Ovary (tissue), 10 donors: ENCODE measurements at regions of chr13 and their contacts with region 1.

Region 1: DNA sequence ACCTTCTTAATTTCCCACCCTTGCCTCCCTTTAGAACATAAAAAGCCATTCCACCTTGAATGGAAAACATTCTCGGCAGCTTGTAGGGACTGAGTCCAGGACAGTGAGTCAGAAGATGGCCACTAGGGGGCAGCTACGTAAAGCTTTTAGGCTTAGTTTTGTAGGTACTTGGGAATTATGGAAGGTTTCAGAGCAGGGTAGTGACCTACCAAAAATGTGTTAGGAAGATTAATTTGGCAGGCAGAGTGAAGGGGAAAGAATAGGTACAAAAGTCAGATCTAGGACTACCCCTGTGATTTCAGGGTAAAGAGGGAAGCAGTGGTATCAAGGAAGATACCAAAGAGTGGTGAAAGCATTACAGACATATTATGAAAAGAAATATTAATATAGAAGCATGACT is 198.4 kb downstream of the NDFIP2 start:
- DNase-seq: peak; percentile 61 to 82 (median 68)
- H3K4me3 ChIP-seq: no peak overlapping the region
- H3K27ac ChIP-seq: no peak overlapping the region
- H3K4me1 ChIP-seq: no peaks in the 10 kb centered on the region
- H3K27me3 ChIP-seq: no peaks in the 10 kb centered on the region
- CTCF ChIP-seq: peak; percentile 48 to 64 (median 49)
- EP300 ChIP-seq: no peak
- POLR2A ChIP-seq: no peak

Region 2: DNA sequence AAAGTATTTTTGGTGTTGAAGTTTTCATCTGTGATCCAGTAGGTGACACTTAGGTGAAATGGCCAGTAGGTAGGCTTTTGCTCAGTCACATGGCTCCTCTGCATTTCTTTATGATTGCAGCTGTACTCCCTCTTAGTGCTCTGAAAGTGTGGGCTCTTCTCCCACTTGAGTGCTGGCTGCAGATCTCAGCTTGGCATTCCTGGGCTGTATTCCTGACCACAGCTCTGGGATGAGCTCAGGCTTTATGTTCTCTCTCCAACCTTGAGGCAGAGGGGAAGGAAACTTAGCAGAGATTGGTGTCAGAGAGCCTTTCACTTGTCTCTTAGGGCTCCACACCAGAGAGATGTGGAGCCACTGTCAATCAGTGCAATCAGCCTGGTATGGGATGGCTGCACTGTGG is 55.9 kb after region 1 on chr13:
- intact Hi-C with region 1: loop called in 1 of 4 experiments (anchors 10 kb)
- DNase-seq: no peak
- H3K4me3 ChIP-seq: no peak overlapping the region
- H3K27ac ChIP-seq: no peak overlapping the region
- H3K4me1 ChIP-seq: no peaks in the 10 kb centered on the region
- H3K27me3 ChIP-seq: no peaks in the 10 kb centered on the region
- CTCF ChIP-seq: no peak
- EP300 ChIP-seq: no peak
- POLR2A ChIP-seq: no peak

Region 3: DNA sequence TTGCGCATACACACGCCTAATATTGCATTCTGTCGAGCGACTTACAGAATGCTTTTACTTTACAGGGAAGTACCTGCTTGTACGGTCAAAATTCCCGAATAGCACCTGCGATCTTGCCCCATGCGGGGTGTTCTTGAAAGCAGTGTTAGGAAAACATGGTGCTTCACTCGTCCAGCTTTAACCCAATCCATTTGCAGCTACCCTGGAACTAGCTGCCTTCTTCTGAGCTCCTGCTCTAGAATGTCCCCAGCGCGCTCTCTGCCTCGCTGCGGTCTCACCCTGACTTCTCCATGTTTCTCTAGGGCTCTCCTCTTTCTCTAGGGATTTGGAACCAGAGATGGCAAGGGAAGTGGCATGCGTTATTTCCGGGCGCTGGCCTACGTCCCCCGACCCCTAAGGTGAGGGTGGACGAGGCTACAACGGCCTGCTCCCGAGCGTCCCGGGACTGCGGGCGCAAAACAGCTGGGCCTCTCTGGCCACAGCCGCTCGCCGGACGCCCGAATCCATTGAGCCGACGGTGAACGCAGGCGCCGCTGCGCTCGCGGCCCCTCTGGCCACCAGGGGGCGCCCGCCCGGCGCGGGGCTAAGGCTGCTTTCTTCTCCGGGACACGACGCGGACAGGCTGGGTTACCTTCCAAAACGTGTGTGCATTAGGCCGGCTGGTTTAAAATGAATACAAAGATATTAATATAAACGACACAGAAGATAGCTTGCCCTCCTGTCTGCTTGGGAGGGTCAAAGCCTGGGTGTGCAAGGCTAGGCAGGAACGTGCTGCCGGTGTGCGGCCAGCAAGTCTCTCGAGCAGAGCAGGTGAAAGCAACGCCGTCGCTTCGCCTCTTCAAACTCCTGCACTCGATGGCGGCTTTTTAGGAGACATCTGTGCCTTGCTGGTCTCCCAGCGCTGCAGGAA is 663.4 kb after region 1 on chr13:
- intact Hi-C with region 1: loop called in 1 of 4 experiments (anchors 10 kb)
- DNase-seq: peak; percentile 74 to 89 (median 82)
- H3K4me3 ChIP-seq: peak overlapping the region; percentile 64
- H3K27ac ChIP-seq: peak overlapping the region; percentile 57 to 85
- H3K4me1 ChIP-seq: no peaks in the 10 kb centered on the region
- H3K27me3 ChIP-seq: no peaks in the 10 kb centered on the region
- CTCF ChIP-seq: peak; percentile 88 to 100 (median 89)
- EP300 ChIP-seq: no peak
- POLR2A ChIP-seq: no peak